ENCODE measurements at regions of chr6 and their contacts with region 1.

Region 1: GRCh38 chr6:112076200-112076599 is 11.1 kb downstream of the TUBE1 start:
- DNase-seq: no peak
- ATAC-seq: no peak
- H3K4me3 Mint-ChIP-seq: no peak overlapping the region
- H3K27ac Mint-ChIP-seq: no peak overlapping the region
- H3K4me1 Mint-ChIP-seq: no peaks in the 10 kb centered on the region
- H3K27me3 Mint-ChIP-seq: no peaks in the 10 kb centered on the region

Region 2: DNA sequence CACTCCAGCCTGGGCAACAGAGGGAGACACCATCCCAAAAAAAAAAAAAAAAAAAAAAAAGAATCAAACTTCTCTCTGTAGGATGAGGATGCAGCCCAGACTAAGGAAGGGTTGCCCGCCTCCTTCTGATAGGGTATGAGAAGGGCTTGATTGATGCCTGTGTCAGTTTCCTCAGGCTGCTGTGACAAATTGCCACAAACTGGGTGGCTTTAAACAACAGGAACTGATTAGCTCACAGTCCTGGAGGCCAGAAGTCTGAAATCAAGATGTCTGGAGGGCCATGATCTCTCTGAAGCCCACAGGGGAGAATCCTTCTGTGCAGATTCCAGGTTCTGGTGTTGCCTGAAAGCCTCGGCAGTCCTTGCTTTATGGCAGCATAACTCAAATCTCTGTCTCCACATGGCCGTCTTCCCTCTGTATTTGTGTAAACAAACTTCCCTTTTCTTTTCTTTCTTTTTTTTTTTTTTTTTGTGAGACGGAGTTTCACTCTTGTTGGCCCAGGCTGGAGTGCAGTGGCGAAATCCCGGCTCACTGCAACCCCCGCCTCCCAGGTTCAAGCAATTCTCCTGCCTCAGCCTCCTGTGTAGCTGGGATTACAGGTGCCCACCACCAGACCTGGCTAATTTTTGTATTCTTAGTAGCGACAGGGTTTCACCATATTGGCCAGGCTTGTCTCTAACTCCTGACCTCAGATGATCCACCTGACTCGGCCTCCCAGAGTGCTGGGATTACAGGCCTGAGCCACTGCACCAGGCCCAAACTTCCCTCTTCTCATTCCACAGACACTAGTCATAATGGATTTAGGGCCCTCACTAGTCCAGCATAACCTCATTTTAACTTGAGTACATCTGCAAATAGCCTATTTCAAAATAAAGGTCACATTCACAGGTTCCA is 1249.7 kb before region 1 on chr6:
- POLR2A ChIA-PET with region 1: interaction called, 12 read pairs
- DNase-seq: no peak
- ATAC-seq: no peak
- H3K4me3 Mint-ChIP-seq: no peak overlapping the region
- H3K27ac Mint-ChIP-seq: no peak overlapping the region
- H3K4me1 Mint-ChIP-seq: peaks cover 8% of the 10 kb centered on the region
- H3K27me3 Mint-ChIP-seq: peaks cover 10% of the 10 kb centered on the region

Region 3: GRCh38 chr6:111950661-111951496 is 125.3 kb before region 1 on chr6:
- POLR2A ChIA-PET with region 1: no interaction called
- DNase-seq: no peak
- ATAC-seq: no peak
- H3K4me3 Mint-ChIP-seq: no peak overlapping the region
- H3K27ac Mint-ChIP-seq: no peak overlapping the region
- H3K4me1 Mint-ChIP-seq: peaks cover 2% of the 10 kb centered on the region
- H3K27me3 Mint-ChIP-seq: peaks cover 3% of the 10 kb centered on the region

Region 4: DNA sequence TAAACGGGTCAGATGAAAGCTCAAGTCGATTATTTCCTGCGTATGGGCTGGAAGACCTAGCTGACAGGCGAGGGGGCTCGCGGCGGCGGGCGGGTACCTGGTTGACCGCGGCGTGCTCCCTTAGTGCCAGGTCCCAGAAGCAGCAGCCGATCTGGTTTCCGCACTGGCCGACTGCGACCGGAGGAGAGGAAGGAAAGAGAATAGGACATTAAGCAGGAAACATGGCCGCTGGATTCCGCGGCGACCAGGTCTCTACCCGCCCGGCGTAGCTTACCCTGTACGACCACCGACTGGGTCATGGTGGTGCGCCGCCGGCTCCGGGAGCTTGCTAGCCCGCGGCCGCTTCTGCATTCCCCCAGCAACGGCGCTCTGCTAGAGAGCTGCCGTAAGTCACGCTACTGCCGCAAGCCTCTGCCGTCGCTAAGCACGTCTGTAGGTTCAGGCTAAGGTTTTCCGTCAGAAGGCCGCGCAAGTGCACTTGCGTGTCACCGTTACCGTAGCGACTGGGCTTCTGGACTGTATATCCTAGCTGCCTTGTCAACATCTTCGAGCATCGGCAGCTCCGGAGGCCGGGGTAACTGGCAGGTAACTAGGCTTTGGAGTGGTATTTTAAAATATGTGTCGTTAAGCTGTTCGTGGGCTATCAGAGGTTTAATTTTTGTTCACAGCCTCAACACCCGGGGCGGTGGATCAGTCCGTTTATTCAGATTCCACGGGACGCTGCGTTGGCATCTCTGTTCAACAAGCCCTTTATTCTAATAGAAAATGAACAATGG is 11.1 kb after region 1 on chr6 and contains the starts of genes FAM229B and TUBE1:
- POLR2A ChIA-PET with region 1: interaction called, 10 read pairs
- DNase-seq: peak; percentile 85
- ATAC-seq: peak; percentile 97
- H3K4me3 Mint-ChIP-seq: no peak within 1 kb of the TSS
- H3K27ac Mint-ChIP-seq: no peak within 1 kb of the TSS
- H3K4me1 Mint-ChIP-seq: peaks cover 3% of the 10 kb centered on the region
- H3K27me3 Mint-ChIP-seq: peaks cover 28% of the 10 kb centered on the region
- total RNA-seq, gene FAM229B: 1.9 to 2.3 TPM
- total RNA-seq, gene TUBE1: 27.6 to 28.2 TPM